Activated T-helper 2 cell treated with anti-CD3 and anti-CD28 coated beads, Interferon-gamma antibody, Interleukin-2, Interleukin-4, amounts not matched to agents 10 μg/mL and 5 μg/mL and 100 μg/mL, durations not matched to agents 14 hours and 24 hours and 36 hours (primary cell): ENCODE measurements at regions of chr13 and their contacts with region 1.

Region 1: GRCh38 chr13:102452831-102453230 is 51.0 kb upstream of the FGF14 start:
- DNase-seq: no peak
- H3K4me3 Mint-ChIP-seq: no peak overlapping the region
- H3K27ac Mint-ChIP-seq: no peak overlapping the region
- H3K4me1 Mint-ChIP-seq: peaks cover 6% of the 10 kb centered on the region
- H3K27me3 Mint-ChIP-seq: no peaks in the 10 kb centered on the region

Region 2: DNA sequence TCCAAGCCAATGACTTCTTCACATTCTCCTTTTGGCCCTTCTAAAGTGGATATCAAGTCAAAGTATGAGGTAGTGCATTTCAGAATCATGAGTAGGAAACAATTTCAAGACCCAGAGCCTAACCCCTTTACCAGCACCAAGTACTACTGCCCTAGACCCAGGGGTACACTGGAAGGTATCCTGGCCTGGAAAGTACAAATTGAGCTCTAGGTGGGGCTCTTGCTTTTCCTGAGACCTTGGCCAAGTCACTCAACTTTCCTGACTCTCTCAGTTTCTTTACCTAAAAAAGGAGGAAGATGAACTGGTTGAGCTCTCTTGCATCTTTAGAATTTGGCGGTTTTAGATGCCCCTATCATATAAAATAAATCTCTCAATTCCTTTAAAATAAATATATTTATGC is 255.6 kb before region 1 on chr13:
- intact Hi-C with region 1: loop called (anchors 10 kb)
- DNase-seq: no peak
- H3K4me3 Mint-ChIP-seq: no peak overlapping the region
- H3K27ac Mint-ChIP-seq: no peak overlapping the region
- H3K4me1 Mint-ChIP-seq: peaks cover 15% of the 10 kb centered on the region
- H3K27me3 Mint-ChIP-seq: peaks cover 3% of the 10 kb centered on the region